Activated CD4-positive, alpha-beta T cell treated with anti-CD3 and anti-CD28 coated beads for 36 hours (primary cell): ENCODE measurements at regions of chr22 and their contacts with region 1.

Region 1: GRCh38 chr22:17742527-17742902 is 31.8 kb downstream of the BID start:
- DNase-seq: peak; percentile 85
- ATAC-seq: peak; percentile 93
- H3K4me3 Mint-ChIP-seq: no peak overlapping the region
- H3K27ac Mint-ChIP-seq: no peak overlapping the region
- H3K4me1 Mint-ChIP-seq: peaks cover 4% of the 10 kb centered on the region
- H3K27me3 Mint-ChIP-seq: no peaks in the 10 kb centered on the region

Region 2: GRCh38 chr22:17140826-17141766 is 601.4 kb before region 1 on chr22:
- CTCF ChIA-PET with region 1: no interaction called
- POLR2A ChIA-PET with region 1: no interaction called
- intact Hi-C with region 1: no loop called
- DNase-seq: no peak
- ATAC-seq: no peak
- H3K4me3 Mint-ChIP-seq: no peak overlapping the region
- H3K27ac Mint-ChIP-seq: no peak overlapping the region
- H3K4me1 Mint-ChIP-seq: no peaks in the 10 kb centered on the region
- H3K27me3 Mint-ChIP-seq: no peaks in the 10 kb centered on the region

Region 3: DNA sequence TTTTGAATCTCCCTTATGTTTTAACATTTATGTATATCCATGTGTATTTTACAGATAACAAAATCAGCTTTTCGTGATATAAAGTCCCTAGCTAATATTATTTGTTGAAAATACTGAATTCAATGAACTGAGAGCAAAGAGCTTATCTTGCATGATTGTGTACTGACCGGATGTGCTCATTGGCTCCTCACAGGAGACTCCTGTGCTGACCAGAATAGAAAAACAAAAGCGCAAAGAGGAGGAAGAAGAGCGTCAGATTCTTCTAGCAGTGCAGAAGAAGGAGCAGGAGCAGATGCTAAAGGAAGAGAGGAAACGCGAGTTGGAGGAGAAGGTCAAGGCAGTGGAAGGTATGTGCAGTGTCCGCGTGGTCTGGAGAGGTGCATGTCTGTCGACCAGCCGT is 218.6 kb before region 1 on chr22:
- CTCF ChIA-PET with region 1: no interaction called
- POLR2A ChIA-PET with region 1: no interaction called
- intact Hi-C with region 1: no loop called
- DNase-seq: no peak
- ATAC-seq: no peak
- H3K4me3 Mint-ChIP-seq: no peak overlapping the region
- H3K27ac Mint-ChIP-seq: no peak overlapping the region
- H3K4me1 Mint-ChIP-seq: peaks cover 4% of the 10 kb centered on the region
- H3K27me3 Mint-ChIP-seq: peaks cover 15% of the 10 kb centered on the region

Region 4: GRCh38 chr22:17754233-17754925 is 11.9 kb after region 1 on chr22:
- CTCF ChIA-PET with region 1: interaction called, 16 read pairs
- POLR2A ChIA-PET with region 1: no interaction called
- intact Hi-C with region 1: no loop called
- DNase-seq: peak; percentile 70
- ATAC-seq: peak; percentile 69
- H3K4me3 Mint-ChIP-seq: no peak overlapping the region
- H3K27ac Mint-ChIP-seq: no peak overlapping the region
- H3K4me1 Mint-ChIP-seq: peaks cover 2% of the 10 kb centered on the region
- H3K27me3 Mint-ChIP-seq: no peaks in the 10 kb centered on the region

Region 5: DNA sequence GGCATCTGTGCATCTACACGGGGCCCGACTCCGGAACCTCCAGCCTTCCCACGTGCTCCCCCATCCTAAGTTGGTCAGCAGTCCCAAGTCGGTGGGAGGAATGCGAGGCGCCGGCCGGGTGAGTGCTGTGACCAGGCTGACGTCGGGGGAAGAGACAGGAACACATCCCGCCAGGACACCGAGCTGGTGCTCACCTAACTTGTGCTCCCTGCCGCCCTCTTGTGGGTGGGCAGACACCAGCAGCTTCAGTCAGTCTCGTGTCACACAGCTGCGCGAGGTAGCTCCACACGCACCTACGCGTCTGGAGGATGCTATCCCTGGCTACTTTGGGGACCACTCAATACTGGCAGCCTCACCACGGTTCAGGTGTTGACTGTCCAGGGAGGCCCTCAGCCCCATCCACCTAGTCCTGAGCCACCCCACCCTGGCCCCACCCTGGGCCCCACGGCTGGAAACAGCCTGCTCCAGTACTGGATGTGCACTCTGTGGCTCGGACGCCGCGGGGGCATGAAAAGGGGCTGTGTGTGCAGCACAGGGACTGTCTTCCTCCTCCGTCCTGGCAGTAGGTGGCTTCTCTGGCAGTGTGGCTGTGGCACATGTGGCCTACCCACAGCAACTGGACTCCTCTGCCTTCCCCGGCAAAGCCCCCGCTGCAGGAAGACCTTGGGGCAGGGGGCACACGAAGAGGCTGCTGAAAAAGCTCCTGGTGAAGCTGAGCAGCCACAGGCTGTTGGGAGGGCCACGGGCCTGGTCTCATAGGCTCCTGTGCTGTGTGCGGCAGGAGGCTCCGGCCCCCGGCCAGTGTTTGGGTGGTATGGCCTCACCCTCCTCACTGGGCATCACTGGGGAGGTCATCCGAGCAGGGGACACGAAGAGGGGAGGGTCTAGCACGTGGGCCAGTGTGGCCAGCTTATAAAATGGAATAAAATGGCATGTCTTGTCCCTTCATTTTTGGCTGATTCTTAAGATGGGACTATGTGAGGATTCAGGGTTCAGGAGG is 43.0 kb after region 1 on chr22:
- CTCF ChIA-PET with region 1: interaction called, 69 read pairs
- POLR2A ChIA-PET with region 1: interaction called, 3 read pairs
- intact Hi-C with region 1: loop called (anchors 1 to 5 kb)
- DNase-seq: peak; percentile 85
- ATAC-seq: peak; percentile 31
- H3K4me3 Mint-ChIP-seq: no peak overlapping the region
- H3K27ac Mint-ChIP-seq: no peak overlapping the region
- H3K4me1 Mint-ChIP-seq: peaks cover 20% of the 10 kb centered on the region
- H3K27me3 Mint-ChIP-seq: no peaks in the 10 kb centered on the region

Region 6: GRCh38 chr22:17891481-17892167 is 149.1 kb after region 1 on chr22:
- CTCF ChIA-PET with region 1: interaction called, 3 read pairs
- POLR2A ChIA-PET with region 1: no interaction called
- intact Hi-C with region 1: loop called in 1 of 2 experiments (anchors 10 kb)
- DNase-seq: peak; percentile 33
- ATAC-seq: no peak
- H3K4me3 Mint-ChIP-seq: no peak overlapping the region
- H3K27ac Mint-ChIP-seq: no peak overlapping the region
- H3K4me1 Mint-ChIP-seq: no peaks in the 10 kb centered on the region
- H3K27me3 Mint-ChIP-seq: no peaks in the 10 kb centered on the region